ENCODE measurements at regions of chr13 and their contacts with region 1.

Region 1: GRCh38 chr13:40982772-40983171 is 36.3 kb downstream of the ELF1 start:
- DNase-seq: peak; percentile 87
- ATAC-seq: peak; percentile 69
- H3K4me3 ChIP-seq: peak overlapping the region; percentile 39 to 94 (median 62)
- H3K4me3 Mint-ChIP-seq: peak overlapping the region; percentile 91
- H3K27ac ChIP-seq: peak overlapping the region; percentile 94 to 97
- H3K27ac Mint-ChIP-seq: peak overlapping the region; percentile 95
- H3K4me1 ChIP-seq: peaks cover 55 to 67% of the 10 kb centered on the region in 2 donors
- H3K4me1 Mint-ChIP-seq: peaks cover 68% of the 10 kb centered on the region
- H3K27me3 ChIP-seq: no peaks in the 10 kb centered on the region
- H3K27me3 Mint-ChIP-seq: no peaks in the 10 kb centered on the region
- CTCF ChIP-seq: no peak

Region 2: GRCh38 chr13:40770934-40771618 is 211.7 kb before region 1 on chr13 and contains the start of gene MRPS31:
- CTCF ChIA-PET with region 1: no interaction called
- POLR2A ChIA-PET with region 1: no interaction called
- intact Hi-C with region 1: loop called (anchors 5 kb)
- DNase-seq: peak; percentile 95
- ATAC-seq: peak; percentile 100
- H3K4me3 ChIP-seq: peak within 1 kb of the TSS; percentile 65 to 99 (median 99)
- H3K4me3 Mint-ChIP-seq: peak within 1 kb of the TSS; percentile 100
- H3K27ac ChIP-seq: peak within 1 kb of the TSS; percentile 64 to 88
- H3K27ac Mint-ChIP-seq: peak within 1 kb of the TSS; percentile 97
- H3K4me1 ChIP-seq: peaks cover 12 to 19% of the 10 kb centered on the region in 2 donors
- H3K4me1 Mint-ChIP-seq: peaks cover 21% of the 10 kb centered on the region
- H3K27me3 ChIP-seq: no peaks in the 10 kb centered on the region
- H3K27me3 Mint-ChIP-seq: no peaks in the 10 kb centered on the region
- CTCF ChIP-seq: no peak
- total RNA-seq, gene MRPS31: 29.7 and 34.4 TPM in 2 replicates

Region 3: GRCh38 chr13:40969169-40969901 is 13.4 kb before region 1 on chr13:
- CTCF ChIA-PET with region 1: interaction called, 7 read pairs
- POLR2A ChIA-PET with region 1: interaction called, 3 read pairs
- intact Hi-C with region 1: loop called (anchors 1 kb)
- DNase-seq: no peak
- ATAC-seq: peak; percentile 50
- H3K4me3 ChIP-seq: no peak overlapping the region
- H3K4me3 Mint-ChIP-seq: peak overlapping the region; percentile 67
- H3K27ac ChIP-seq: peak overlapping the region in 1 of 2 donors; percentile 25
- H3K27ac Mint-ChIP-seq: peak overlapping the region; percentile 20
- H3K4me1 ChIP-seq: peaks cover 77 to 98% of the 10 kb centered on the region in 2 donors
- H3K4me1 Mint-ChIP-seq: peaks cover 91% of the 10 kb centered on the region
- H3K27me3 ChIP-seq: no peaks in the 10 kb centered on the region
- H3K27me3 Mint-ChIP-seq: no peaks in the 10 kb centered on the region
- CTCF ChIP-seq: no peak

Region 4: DNA sequence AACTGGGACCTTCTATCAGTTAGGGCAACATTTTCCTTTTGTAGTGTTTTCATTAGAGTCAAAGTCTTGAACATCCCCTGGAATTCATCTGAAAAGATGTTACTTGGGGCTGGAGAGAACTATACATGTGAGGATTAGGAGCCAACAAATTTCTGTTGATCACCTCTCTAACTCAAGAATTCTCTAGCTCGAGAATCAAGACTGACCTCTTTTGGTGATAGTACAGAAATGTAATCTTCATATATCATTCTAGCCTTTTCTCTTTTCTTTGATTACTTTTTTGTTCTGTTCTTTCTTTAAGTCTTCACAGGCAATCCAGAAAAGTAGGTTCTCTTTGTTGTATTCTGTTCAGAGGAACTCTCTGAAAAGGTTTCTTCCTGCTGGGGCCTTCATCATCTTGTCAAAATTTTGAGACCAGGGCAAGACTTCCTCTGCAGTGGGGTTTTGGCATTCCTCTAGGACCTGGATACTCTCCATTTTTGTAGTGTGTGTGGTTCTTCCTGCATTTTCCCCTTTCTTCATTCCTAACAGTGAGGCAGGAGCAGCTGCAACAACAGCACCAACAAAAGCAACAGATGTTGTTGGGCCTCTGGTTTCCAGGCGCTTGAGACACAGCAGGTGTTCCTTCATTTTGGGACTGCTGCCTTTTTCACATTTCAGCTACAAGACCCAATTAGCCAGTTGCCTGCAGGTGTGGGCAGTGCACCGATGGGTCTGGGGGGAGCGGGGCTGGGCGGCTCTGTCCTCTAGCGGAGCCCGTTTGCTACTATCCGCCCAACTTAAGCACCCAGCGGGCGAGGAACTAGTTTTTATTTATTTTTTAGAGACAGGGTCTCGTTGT is 10.1 kb after region 1 on chr13:
- CTCF ChIA-PET with region 1: interaction called, 3 read pairs
- POLR2A ChIA-PET with region 1: interaction called, 4 read pairs
- intact Hi-C with region 1: loop called (anchors 1 kb)
- DNase-seq: peak; percentile 43
- ATAC-seq: no peak
- H3K4me3 ChIP-seq: no peak overlapping the region
- H3K4me3 Mint-ChIP-seq: peak overlapping the region; percentile 43
- H3K27ac ChIP-seq: peak overlapping the region; percentile 36 to 70
- H3K27ac Mint-ChIP-seq: peak overlapping the region; percentile 78
- H3K4me1 ChIP-seq: peaks cover 60 to 83% of the 10 kb centered on the region in 2 donors
- H3K4me1 Mint-ChIP-seq: peaks cover 75% of the 10 kb centered on the region
- H3K27me3 ChIP-seq: no peaks in the 10 kb centered on the region
- H3K27me3 Mint-ChIP-seq: no peaks in the 10 kb centered on the region
- CTCF ChIP-seq: peak; percentile 16

Region 5: DNA sequence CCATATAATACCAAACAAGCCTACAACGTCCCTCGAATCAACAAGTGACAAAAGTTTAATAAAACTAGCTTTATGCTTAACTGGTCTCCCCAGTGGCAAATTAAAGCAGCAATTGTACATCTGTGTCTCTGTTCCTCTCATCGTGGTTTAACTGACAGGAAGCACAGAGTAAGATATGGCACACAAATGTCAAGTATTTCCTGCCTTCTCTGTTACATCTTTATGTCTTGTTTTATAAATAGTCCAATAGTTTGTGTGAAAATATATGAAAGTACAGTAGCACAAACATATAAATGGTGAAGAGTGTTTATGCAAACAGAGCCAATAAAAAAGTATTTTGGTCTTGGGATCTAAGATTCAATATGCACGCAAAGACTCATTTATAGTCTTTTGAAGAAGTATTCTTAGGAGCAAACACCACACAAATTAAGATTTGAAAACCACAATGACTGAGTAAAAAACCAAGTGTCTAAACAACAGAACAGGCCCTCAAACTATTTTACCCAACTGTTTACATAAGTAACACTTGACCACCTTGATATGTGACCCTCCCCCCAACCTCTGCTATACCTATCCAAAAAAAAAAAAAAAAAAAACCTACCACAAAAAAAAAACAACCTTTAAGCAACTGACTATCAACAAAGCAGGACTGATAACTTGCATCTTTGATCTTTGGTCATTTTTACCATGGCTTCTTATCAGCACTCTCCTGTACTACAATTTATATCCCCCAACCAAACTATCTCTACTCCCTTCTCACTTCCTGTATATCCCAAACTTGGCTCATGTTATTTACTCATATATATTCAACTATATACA is 22.3 kb after region 1 on chr13:
- CTCF ChIA-PET with region 1: interaction called, 3 read pairs
- POLR2A ChIA-PET with region 1: no interaction called
- intact Hi-C with region 1: loop called (anchors 2 kb)
- DNase-seq: peak; percentile 68
- ATAC-seq: peak; percentile 78
- H3K4me3 ChIP-seq: peak overlapping the region in 3 of 5 experiments; percentile 10 to 31 (median 11)
- H3K4me3 Mint-ChIP-seq: peak overlapping the region; percentile 57
- H3K27ac ChIP-seq: peak overlapping the region; percentile 61 to 79
- H3K27ac Mint-ChIP-seq: peak overlapping the region; percentile 70
- H3K4me1 ChIP-seq: peaks cover 68 to 82% of the 10 kb centered on the region in 2 donors
- H3K4me1 Mint-ChIP-seq: peaks cover 69% of the 10 kb centered on the region
- H3K27me3 ChIP-seq: no peaks in the 10 kb centered on the region
- H3K27me3 Mint-ChIP-seq: no peaks in the 10 kb centered on the region
- CTCF ChIP-seq: no peak

Region 6: GRCh38 chr13:41019011-41019487 is 36.3 kb after region 1 on chr13 and contains the start of gene ELF1:
- CTCF ChIA-PET with region 1: interaction called, 3 read pairs
- POLR2A ChIA-PET with region 1: interaction called, 3 read pairs
- intact Hi-C with region 1: loop called (anchors 1 kb)
- DNase-seq: peak; percentile 91
- ATAC-seq: peak; percentile 89
- H3K4me3 ChIP-seq: peak within 1 kb of the TSS; percentile 65 to 99 (median 75)
- H3K4me3 Mint-ChIP-seq: peak within 1 kb of the TSS; percentile 94
- H3K27ac ChIP-seq: peak within 1 kb of the TSS; percentile 96 to 100
- H3K27ac Mint-ChIP-seq: peak within 1 kb of the TSS; percentile 98
- H3K4me1 ChIP-seq: peaks cover 29 to 33% of the 10 kb centered on the region in 2 donors
- H3K4me1 Mint-ChIP-seq: peaks cover 52% of the 10 kb centered on the region
- H3K27me3 ChIP-seq: no peaks in the 10 kb centered on the region
- H3K27me3 Mint-ChIP-seq: no peaks in the 10 kb centered on the region
- CTCF ChIP-seq: no peak
- total RNA-seq, gene ELF1: 185 and 186 TPM in 2 replicates

Region 7: GRCh38 chr13:41099986-41100385 is 117.2 kb after region 1 on chr13:
- CTCF ChIA-PET with region 1: no interaction called
- POLR2A ChIA-PET with region 1: no interaction called
- intact Hi-C with region 1: no loop called
- DNase-seq: no peak
- ATAC-seq: no peak
- H3K4me3 ChIP-seq: no peak overlapping the region
- H3K4me3 Mint-ChIP-seq: no peak overlapping the region
- H3K27ac ChIP-seq: no peak overlapping the region
- H3K27ac Mint-ChIP-seq: no peak overlapping the region
- H3K4me1 ChIP-seq: no peaks in the 10 kb centered on the region
- H3K4me1 Mint-ChIP-seq: no peaks in the 10 kb centered on the region
- H3K27me3 ChIP-seq: no peaks in the 10 kb centered on the region
- H3K27me3 Mint-ChIP-seq: peaks cover 2% of the 10 kb centered on the region
- CTCF ChIP-seq: no peak

Region 8: GRCh38 chr13:41193919-41194824 is 211.4 kb after region 1 on chr13 and contains the start of gene KBTBD7:
- CTCF ChIA-PET with region 1: no interaction called
- POLR2A ChIA-PET with region 1: no interaction called
- intact Hi-C with region 1: loop called (anchors 10 kb)
- DNase-seq: peak; percentile 90
- ATAC-seq: peak; percentile 94
- H3K4me3 ChIP-seq: peak within 1 kb of the TSS; percentile 59 to 92 (median 88)
- H3K4me3 Mint-ChIP-seq: peak within 1 kb of the TSS; percentile 96
- H3K27ac ChIP-seq: peak within 1 kb of the TSS; percentile 32 to 63
- H3K27ac Mint-ChIP-seq: peak within 1 kb of the TSS; percentile 94
- H3K4me1 ChIP-seq: peaks cover 33 to 34% of the 10 kb centered on the region in 2 donors
- H3K4me1 Mint-ChIP-seq: peaks cover 45% of the 10 kb centered on the region
- H3K27me3 ChIP-seq: no peaks in the 10 kb centered on the region
- H3K27me3 Mint-ChIP-seq: no peaks in the 10 kb centered on the region
- CTCF ChIP-seq: no peak
- total RNA-seq, gene KBTBD7: 8.4 and 9.2 TPM in 2 replicates

Measured in B cell (primary cell).